Posterior vena cava (tissue), 2 donors: ENCODE measurements at regions of chr4 and their contacts with region 1.

Region 1: GRCh38 chr4:155675709-155676429 is 9.2 kb downstream of the GUCY1A1 start:
- DNase-seq: no peak

Region 2: DNA sequence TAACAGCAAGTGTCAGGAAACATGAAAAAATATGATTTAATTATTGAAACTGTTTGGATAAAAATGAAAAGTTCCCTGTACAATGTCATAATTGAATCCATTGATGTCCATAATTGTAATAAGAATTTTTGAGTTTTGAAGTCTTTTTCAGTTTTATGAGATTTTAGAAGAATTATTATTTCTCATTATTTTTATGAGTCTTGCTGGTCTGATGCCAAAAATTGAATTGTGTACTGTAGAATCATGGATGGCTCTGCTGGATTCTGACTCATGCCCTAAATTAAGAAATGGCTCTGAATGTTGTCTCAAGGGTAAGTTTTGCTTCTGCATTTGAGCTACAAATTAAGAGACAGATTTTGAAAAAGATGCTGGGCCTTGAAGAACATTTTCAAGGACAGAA is 166.3 kb before region 1 on chr4:
- intact Hi-C with region 1: loop called in 1 of 2 experiments (anchors 10 kb)
- DNase-seq: no peak

Region 3: GRCh38 chr4:155787113-155787710 is 111.3 kb after region 1 on chr4:
- intact Hi-C with region 1: loop called in 1 of 2 experiments (anchors 10 kb)
- DNase-seq: no peak